ENCODE measurements at regions of chr3 and their contacts with region 1.

Region 1: DNA sequence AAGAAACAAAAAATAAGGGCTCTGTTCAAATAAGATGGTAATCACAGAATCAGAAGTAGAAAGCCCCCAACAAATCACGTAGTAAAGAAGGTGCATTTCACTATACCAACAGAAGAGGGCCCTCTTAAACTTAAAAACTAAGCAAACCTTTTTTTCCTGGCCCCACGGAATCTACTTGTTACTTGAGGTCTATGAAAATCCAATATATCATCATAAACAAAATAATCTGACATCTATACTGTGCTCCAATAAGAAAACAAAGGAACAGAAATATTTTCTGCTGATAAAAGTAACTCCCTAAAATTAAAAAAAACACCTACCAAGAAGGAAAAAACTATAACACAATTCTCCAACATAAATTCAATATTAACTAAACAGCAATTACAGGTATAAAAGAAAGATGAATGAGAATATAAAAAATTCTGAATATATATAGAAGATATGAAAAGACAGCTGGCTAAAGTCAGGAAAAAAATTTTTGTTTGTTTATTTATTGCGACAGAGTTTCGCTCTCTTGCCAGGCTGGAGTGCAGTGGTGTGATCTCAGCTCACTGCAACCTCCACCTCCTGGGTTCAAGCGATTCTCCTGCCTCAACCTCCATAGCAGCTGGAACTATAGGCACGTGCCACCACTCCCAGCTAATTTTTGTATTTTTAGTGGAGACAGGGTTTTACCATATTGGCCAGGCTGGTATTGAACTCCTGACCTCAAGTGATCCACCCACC is 81.8 kb downstream of the CLASP2 start:
- DNase-seq: peak; percentile 13 to 48 (median 36)
- H3K4me3 ChIP-seq: no peak overlapping the region
- H3K4me3 Mint-ChIP-seq: no peak overlapping the region
- H3K27ac ChIP-seq: no peak overlapping the region
- H3K27ac Mint-ChIP-seq: peak overlapping the region in 2 of 7 donors; percentile 21 to 51
- H3K4me1 ChIP-seq: no peaks in the 10 kb centered on the region
- H3K4me1 Mint-ChIP-seq: peaks cover 2% of the 10 kb centered on the region
- H3K27me3 ChIP-seq: no peaks in the 10 kb centered on the region
- H3K27me3 Mint-ChIP-seq: no peaks in the 10 kb centered on the region
- CTCF ChIP-seq: peak; percentile 87

Region 2: GRCh38 chr3:33496449-33496848 is 139.8 kb before region 1 on chr3:
- intact Hi-C with region 1: no loop called
- DNase-seq: no peak
- H3K4me3 ChIP-seq: no peak overlapping the region
- H3K4me3 Mint-ChIP-seq: no peak overlapping the region
- H3K27ac ChIP-seq: no peak overlapping the region
- H3K27ac Mint-ChIP-seq: no peak overlapping the region
- H3K4me1 ChIP-seq: no peaks in the 10 kb centered on the region
- H3K4me1 Mint-ChIP-seq: no peaks in the 10 kb centered on the region
- H3K27me3 ChIP-seq: no peaks in the 10 kb centered on the region
- H3K27me3 Mint-ChIP-seq: peaks cover 0 to 2% (median 1%) of the 10 kb centered on the region in 3 donors
- CTCF ChIP-seq: no peak

Region 3: GRCh38 chr3:33578325-33579177 is 57.7 kb before region 1 on chr3:
- intact Hi-C with region 1: no loop called
- DNase-seq: no peak
- H3K4me3 ChIP-seq: no peak overlapping the region
- H3K4me3 Mint-ChIP-seq: no peak overlapping the region
- H3K27ac ChIP-seq: no peak overlapping the region
- H3K27ac Mint-ChIP-seq: no peak overlapping the region
- H3K4me1 ChIP-seq: peaks cover 7 to 17% of the 10 kb centered on the region in 2 donors
- H3K4me1 Mint-ChIP-seq: peaks cover 14% of the 10 kb centered on the region
- H3K27me3 ChIP-seq: no peaks in the 10 kb centered on the region
- H3K27me3 Mint-ChIP-seq: peaks cover 0 to 2% (median 0%) of the 10 kb centered on the region in 3 donors
- CTCF ChIP-seq: no peak

Region 4: DNA sequence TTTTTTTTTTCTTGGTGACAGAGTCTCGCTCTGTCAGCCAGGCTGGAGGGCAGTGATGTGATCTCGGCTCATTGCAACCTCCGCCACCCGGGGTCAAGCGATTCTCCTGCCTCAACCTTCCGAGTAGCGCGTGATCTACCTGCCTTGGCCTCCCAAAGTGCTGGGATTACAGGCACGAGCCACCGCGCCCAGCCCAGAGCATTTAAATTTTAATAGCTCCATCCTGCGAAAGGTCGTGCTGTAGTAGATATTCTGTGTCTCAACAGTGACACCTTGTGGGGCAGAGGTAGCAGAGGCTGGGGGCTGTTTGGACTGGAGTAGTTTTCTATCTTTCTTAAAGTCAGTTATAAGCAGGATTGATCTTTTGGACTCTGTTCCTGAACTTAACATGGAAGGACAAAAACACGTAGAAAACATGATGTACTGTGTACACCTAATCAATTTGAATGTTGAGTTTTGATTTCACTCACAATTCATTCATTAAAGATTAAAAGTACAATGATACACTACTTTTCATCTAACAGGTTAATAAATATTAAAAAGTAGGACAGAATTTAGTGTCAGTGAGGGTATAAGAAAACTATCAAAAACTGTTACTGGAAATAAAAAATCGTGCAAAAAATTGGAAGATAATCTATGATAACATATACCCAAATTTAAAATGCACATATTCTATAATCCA is 151.2 kb after region 1 on chr3:
- intact Hi-C with region 1: loop called (anchors 2 to 5 kb)
- DNase-seq: peak; percentile 56 to 70 (median 57)
- H3K4me3 ChIP-seq: no peak overlapping the region
- H3K4me3 Mint-ChIP-seq: peak overlapping the region; percentile 64 to 84
- H3K27ac ChIP-seq: no peak overlapping the region
- H3K27ac Mint-ChIP-seq: peak overlapping the region in 1 of 7 donors; percentile 50
- H3K4me1 ChIP-seq: peaks cover 13 to 20% of the 10 kb centered on the region in 2 donors
- H3K4me1 Mint-ChIP-seq: peaks cover 20% of the 10 kb centered on the region
- H3K27me3 ChIP-seq: no peaks in the 10 kb centered on the region
- H3K27me3 Mint-ChIP-seq: no peaks in the 10 kb centered on the region
- CTCF ChIP-seq: peak; percentile 81

Measured in CD14-positive monocyte (primary cell).